H1 (cell line): ENCODE measurements at regions of chr10 and their contacts with region 1.

Region 1: DNA sequence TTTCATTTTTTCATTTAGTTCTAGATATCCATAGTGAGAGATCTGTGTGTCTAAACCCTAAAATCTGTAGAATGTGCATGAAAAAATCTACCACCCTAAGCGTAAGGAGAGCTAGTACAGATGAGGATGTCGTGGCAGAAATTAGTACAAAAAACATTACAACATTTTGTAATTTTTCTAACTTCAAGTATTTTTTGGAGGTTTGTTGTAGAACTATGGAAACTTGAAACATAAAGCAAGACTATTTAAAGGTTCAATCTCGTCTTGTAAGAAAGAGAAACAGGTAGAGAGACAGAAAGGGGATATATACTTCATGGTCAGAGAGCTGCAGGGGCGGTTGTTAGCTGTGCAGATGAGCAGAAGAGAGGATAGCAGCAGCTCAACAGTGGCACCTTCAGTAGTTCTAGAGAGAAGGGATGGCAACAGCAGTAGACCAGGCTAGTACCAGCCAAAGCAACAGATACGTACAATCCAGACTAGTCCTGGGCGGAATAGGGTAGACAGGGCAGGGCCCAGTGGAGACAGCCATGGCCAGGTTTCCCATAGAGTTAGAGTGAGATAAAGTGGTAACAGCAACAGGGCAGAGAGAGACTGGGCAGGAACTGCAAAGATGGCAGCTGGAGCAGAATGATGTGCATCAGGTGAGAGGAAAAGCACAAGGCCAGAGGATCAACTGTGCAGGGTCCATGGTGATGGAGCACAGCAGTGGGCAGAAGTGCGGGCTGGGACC is 145.2 kb downstream of the FRMD4A start:
- DNase-seq: peak; percentile 64 to 80
- H3K4me3 ChIP-seq: no peak overlapping the region
- H3K27ac ChIP-seq: peak overlapping the region; percentile 81
- H3K4me1 ChIP-seq: peaks cover 0 to 6% (median 3%) of the 10 kb centered on the region in 4 experiments; a peak in 4 of 7 replicates
- H3K27me3 ChIP-seq: no peaks in the 10 kb centered on the region
- CTCF ChIP-seq: peak in 2 of 3 experiments; percentile 10 to 20; a peak in 2 of 4 replicates
- EP300 ChIP-seq: 0 out of 3 replicates have a peak, but pooled peaks of 1 of the 2 experiments have one; percentile 58
- POLR2A ChIP-seq: peak; percentile 99
- RAD21 ChIP-seq: peak; percentile 51

Region 2: DNA sequence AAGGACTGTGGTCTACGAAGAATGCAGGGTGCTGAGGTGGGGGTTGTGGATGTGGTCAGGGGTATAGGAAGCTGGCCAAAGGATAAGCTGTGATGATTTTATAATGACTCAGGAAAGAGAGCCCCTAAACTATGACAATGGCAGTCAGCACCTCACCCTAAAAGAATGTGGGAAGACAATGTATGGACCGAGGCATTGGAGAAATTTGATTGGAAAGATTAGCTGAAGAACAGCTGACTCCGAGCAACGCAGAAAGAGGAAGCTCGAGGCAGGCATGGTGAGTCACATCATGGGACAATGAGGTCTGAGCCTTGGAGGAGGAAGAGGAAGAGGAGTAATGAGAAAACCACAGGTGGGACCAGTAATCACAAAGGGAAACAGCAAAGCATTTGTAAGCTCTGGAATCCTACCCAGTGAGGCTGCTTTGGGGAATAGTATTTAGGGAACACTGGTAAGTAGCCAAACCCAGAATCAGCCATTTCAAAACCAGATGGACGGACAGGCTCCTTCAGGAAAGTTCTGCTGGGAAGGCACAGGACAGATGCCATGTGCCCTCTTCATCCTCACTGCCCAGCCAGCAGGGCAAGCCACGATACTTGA is 303.3 kb before region 1 on chr10:
- CTCF ChIA-PET with region 1: no interaction called
- POLR2A ChIA-PET with region 1: interaction called, 15 read pairs
- DNase-seq: peak; percentile 65 to 86
- H3K4me3 ChIP-seq: peak overlapping the region in 3 of 4 experiments; percentile 20 to 35 (median 26); a peak in 4 of 8 replicates
- H3K27ac ChIP-seq: peak overlapping the region; percentile 85
- H3K4me1 ChIP-seq: peaks cover 14 to 24% (median 20%) of the 10 kb centered on the region in 4 experiments
- H3K27me3 ChIP-seq: no peaks in the 10 kb centered on the region
- CTCF ChIP-seq: no peak
- EP300 ChIP-seq: peak in 1 of 2 experiments; percentile 67; a peak in 1 of 3 replicates
- POLR2A ChIP-seq: peak; percentile 72 to 81
- RAD21 ChIP-seq: peak in 1 of 2 experiments; percentile 6; a peak in 1 of 4 replicates

Region 3: GRCh38 chr10:14163377-14164086 is 21.9 kb before region 1 on chr10:
- CTCF ChIA-PET with region 1: no interaction called
- POLR2A ChIA-PET with region 1: interaction called, 11 read pairs
- DNase-seq: no peak
- H3K4me3 ChIP-seq: no peak overlapping the region
- H3K27ac ChIP-seq: no peak overlapping the region
- H3K4me1 ChIP-seq: peaks cover 0 to 11% (median 2%) of the 10 kb centered on the region in 4 experiments; a peak in 4 of 7 replicates
- H3K27me3 ChIP-seq: no peaks in the 10 kb centered on the region
- CTCF ChIP-seq: no peak
- EP300 ChIP-seq: no peak
- POLR2A ChIP-seq: no peak
- RAD21 ChIP-seq: no peak

Region 4: GRCh38 chr10:14200698-14201544 is 15.4 kb after region 1 on chr10:
- CTCF ChIA-PET with region 1: interaction called, 92 read pairs
- POLR2A ChIA-PET with region 1: interaction called, 65 read pairs
- DNase-seq: peak in 1 of 2 experiments; percentile 92
- H3K4me3 ChIP-seq: no peak overlapping the region
- H3K27ac ChIP-seq: no peak overlapping the region
- H3K4me1 ChIP-seq: peaks cover 0 to 5% (median 2%) of the 10 kb centered on the region in 4 experiments; a peak in 4 of 7 replicates
- H3K27me3 ChIP-seq: peaks cover 0 to 1% (median 0%) of the 10 kb centered on the region in 4 experiments; a peak in 1 of 7 replicates
- CTCF ChIP-seq: peak; percentile 76 to 87 (median 83)
- EP300 ChIP-seq: no peak
- POLR2A ChIP-seq: no peak
- RAD21 ChIP-seq: peak; percentile 62 to 68

Region 5: DNA sequence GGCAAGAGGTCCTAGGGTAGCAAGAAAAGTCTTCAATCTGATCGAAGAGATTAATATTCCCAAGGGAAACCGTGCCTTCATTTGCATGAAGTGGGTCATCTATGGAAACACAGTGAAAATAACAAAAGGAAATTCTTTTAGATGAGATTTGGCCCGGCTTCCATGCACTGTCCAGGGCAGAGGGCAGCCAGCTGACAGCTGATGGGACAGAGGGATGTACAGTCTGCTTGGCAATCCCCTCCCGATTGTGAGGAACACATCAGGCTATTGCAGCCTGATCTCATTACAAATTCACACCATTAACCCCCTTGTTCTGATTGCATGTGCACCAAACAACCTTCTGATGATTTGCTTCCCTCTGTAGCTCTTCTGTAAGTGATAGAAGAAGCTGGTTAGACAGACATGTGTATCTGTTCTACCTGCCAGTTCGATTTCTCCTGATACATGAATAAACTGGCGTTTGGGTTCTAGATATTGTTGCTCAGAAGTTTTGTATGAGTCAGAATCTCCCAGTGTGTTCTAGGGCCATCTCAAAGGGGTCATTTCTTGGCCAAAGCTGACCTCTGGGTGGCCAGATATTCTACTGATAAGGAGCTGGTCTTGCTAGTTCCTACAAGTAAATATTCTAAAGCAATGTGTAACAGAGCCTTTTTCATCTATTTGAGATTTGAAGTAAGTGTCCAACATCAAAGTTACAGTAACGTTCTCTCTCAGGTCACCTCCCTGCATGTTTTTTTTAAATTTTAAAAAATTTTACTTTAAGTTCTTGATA is 40.1 kb after region 1 on chr10:
- CTCF ChIA-PET with region 1: no interaction called
- POLR2A ChIA-PET with region 1: no interaction called
- DNase-seq: no peak
- H3K4me3 ChIP-seq: no peak overlapping the region
- H3K27ac ChIP-seq: no peak overlapping the region
- H3K4me1 ChIP-seq: no peaks in the 10 kb centered on the region
- H3K27me3 ChIP-seq: no peaks in the 10 kb centered on the region
- CTCF ChIP-seq: no peak
- EP300 ChIP-seq: no peak
- POLR2A ChIP-seq: no peak
- RAD21 ChIP-seq: no peak

Region 6: DNA sequence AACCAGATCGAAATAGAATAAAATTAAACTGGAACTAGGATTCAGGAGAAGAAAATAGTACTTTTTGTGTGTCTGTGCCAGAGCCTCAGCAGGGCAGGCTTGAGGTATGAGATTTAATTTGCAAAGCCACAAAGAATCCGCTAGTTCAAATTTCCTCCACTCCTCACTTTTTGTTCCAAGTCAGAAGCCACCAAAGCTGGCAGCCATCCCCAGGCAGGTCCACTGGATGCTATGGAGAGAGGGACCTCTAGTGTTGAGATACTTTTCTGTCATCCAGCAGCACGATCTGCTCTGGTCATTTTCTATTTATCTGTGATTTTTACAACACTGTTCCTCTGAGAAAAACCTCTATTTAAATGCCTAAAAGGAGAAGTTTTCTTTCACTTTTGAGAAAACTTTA is 293.1 kb after region 1 on chr10:
- CTCF ChIA-PET with region 1: interaction called, 11 read pairs
- POLR2A ChIA-PET with region 1: interaction called, 22 read pairs
- DNase-seq: peak in 1 of 2 experiments; percentile 46
- H3K4me3 ChIP-seq: no peak overlapping the region
- H3K27ac ChIP-seq: no peak overlapping the region
- H3K4me1 ChIP-seq: no peaks in the 10 kb centered on the region
- H3K27me3 ChIP-seq: no peaks in the 10 kb centered on the region
- CTCF ChIP-seq: peak; percentile 56 to 82 (median 75)
- EP300 ChIP-seq: no peak
- POLR2A ChIP-seq: no peak
- RAD21 ChIP-seq: peak; percentile 97 to 98